Dendritic cell treated with granulocyte-macrophage colony-stimulating factor and Interleukin-4, amounts not matched to agents 40 ng/mL and 50 ng/mL, for 4 days (primary cell): ENCODE measurements at regions of chr15 and their contacts with region 1.

Region 1: DNA sequence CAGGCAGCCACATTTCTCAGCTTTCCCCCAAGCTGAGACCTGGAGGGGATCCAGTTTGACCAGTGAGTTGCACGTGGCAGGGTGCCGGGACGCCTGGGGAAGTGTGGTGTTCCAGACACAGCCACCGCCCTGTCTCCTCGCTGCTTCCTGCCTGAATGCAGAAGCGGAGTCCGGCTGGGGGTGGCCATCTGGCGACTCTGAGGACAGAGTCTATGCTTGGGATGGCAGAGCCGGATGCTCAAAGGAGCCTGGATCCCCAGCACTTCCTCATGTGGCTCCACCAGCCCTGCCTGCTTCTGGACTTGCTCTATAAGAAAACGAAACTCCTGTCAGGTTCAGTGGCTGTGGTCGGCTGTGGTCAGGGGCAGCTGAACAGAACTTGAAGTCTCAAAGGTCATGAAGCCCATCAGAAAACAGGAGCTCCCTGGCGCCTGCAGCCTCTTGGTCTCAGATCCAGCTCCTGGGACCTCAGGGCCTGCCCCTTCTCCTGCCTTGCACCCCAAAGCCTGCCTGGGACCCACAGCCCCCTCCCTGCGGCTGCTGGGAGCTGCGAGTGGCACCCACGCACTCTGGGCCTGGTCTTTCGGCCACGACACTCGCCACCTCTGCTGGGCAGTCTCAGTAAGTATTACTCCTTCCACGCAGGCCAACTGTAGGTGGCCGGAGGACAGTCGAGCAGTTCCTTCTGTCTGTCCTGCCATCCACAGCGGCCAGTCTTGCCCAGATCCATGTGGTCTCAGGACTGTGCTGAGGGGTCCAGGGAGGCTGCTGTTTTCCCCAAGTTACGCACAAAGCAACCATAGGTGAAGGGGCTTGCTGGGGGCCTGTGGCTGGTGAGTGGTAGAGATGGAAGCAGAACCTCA is 112.8 kb upstream of the MEF2A start:
- H3K4me3 Mint-ChIP-seq: peak overlapping the region; percentile 62
- H3K27ac Mint-ChIP-seq: peak overlapping the region; percentile 98
- H3K4me1 Mint-ChIP-seq: peaks cover 71% of the 10 kb centered on the region
- H3K27me3 Mint-ChIP-seq: no peaks in the 10 kb centered on the region

Region 2: DNA sequence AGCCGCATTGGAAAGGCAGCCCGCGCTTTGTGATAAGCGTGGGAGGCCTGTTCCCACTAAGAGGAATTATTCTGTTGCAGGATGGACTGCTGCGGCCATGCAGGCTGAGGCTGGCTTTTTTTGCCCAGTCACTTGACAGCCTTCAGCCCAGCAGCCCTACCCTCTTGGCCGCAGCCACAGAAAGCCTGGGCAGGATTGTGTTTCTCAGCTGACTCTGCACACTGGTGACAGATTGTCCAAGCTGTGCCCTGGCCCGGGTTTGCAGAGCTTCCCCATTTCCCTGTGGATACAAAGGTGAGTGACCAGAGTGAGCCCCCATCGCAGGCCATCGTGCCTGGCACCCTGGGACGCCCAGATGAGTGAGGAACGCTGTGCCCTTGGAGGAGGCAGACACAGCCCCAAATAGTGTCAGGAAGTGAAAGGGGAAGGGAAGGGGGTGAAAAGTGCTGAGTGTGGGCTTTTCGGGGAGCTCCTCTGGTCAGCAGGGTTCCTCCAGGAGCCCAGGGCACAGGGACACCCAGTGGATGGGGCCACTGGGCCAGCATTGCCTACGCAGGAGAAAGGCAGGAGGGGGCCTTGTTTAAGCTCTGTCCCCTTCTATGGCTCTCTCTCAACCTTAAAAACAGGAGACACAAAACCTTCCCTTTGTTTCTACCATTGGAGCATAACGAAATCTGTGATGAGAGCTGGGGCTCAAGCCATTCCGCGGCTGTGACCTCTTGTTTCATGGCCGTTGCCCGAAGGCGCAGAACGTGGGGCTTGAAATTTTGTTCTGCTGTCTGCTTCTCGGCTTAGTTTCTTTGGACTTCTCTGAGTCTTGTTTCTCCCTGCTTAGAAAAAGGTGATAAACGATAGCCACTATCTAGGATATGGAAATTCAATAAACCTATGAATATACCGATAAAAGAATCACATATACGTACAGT is 21.2 kb after region 1 on chr15:
- intact Hi-C with region 1: loop called (anchors 1 kb)
- H3K4me3 Mint-ChIP-seq: peak overlapping the region; percentile 61
- H3K27ac Mint-ChIP-seq: peak overlapping the region; percentile 93
- H3K4me1 Mint-ChIP-seq: peaks cover 69% of the 10 kb centered on the region
- H3K27me3 Mint-ChIP-seq: no peaks in the 10 kb centered on the region

Region 3: DNA sequence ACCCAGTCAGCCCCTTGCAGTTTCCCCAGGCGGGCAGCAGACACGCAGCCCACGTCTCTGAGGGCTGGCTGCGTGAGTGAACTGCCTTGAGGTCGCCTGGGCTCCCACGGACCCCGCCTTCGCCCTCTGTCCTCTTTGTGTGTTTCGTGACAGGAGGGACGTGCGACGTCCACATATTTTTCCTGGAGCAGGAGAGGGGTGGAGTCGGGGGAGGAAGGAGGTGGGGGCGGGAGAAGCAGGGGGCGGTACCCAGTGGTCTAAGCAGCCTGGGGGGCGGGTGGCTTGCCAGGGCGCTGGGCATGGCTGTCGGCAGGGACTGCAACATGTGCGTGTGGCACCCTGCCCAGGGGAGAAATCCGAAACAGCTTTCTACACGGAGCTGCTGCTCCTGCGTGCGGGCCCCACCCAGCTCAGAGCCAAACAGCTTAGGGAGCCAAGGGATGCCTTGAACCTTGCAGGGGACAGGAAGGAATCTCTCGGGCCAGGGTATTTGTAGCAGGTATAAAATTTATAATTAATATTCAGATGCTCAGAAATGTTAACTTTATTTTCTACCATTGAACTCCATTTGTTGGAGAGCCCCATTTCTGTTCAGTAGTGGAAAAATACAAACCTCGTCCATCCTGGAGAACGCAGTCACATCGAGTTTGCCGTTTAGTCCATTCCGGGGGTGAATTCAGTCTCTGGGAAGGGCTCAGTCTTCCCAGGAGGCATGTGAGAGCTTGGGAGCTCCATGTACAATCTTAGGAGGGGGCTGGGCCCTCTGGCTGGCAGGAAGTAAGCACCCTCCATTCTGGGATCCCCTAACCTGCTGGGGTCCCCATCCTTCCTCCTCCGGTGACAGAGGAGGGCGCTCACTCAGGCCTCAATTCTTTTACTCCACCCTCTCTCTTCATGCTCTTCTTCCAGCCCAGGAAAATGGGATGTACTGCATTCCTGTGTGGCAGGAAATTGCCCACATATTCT is 33.6 kb after region 1 on chr15:
- intact Hi-C with region 1: loop called (anchors 5 kb)
- H3K4me3 Mint-ChIP-seq: peak overlapping the region; percentile 60
- H3K27ac Mint-ChIP-seq: peak overlapping the region; percentile 83
- H3K4me1 Mint-ChIP-seq: peaks cover 47% of the 10 kb centered on the region
- H3K27me3 Mint-ChIP-seq: peaks cover 2% of the 10 kb centered on the region

Region 4: GRCh38 chr15:99845009-99845408 is 392.0 kb after region 1 on chr15:
- intact Hi-C with region 1: no loop called
- H3K4me3 Mint-ChIP-seq: no peak overlapping the region
- H3K27ac Mint-ChIP-seq: no peak overlapping the region
- H3K4me1 Mint-ChIP-seq: no peaks in the 10 kb centered on the region
- H3K27me3 Mint-ChIP-seq: no peaks in the 10 kb centered on the region